Gastrocnemius medialis (tissue), 4 donors: ENCODE measurements at regions of chr11 and their contacts with region 1.

Region 1: DNA sequence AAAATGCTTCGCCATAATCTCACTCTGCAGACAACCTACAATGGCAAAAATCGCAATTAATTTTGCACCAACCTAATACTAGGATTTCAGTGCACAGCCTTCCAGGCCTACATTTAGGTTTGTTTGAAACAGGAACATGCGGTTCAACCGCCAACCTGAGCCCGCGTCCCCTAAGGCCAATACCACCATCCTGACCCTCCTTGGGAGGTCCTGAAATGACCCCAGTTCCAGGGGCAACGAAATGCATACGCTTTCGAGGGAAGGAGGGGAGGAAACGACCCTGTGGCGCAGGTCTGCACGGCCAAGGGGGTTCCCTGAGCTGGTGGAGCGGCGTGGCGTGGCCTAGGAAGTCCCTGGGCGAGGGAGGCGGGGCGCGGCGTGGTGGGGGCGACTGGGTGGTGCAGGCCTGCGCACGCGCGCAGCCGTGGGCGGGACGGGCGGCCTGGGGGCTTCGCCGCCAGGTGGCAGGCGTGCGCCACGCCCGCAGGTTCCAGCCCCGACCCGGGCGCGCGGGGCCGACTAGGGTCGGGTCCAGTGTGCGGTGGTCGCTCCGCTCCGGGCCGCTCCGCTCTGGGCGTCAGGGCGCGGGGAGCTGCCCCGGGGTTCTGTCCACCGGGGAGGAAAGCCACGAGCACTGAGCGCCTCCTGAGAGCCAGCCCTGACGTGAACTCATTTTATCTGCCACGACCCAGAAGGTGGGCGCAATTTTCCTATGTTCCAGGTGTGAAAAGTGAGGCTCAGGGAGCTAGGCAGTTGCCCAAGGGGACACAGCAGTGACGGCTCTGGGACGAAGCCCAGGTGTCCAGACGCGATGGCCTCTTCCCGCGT is 94.1 kb downstream of the SWAP70 start:
- DNase-seq: peak; percentile 67 to 73
- ATAC-seq: peak; percentile 51 to 70
- H3K4me3 ChIP-seq: peak overlapping the region; percentile 61 to 86 (median 69)
- H3K27ac ChIP-seq: peak overlapping the region; percentile 76 to 86 (median 83)
- H3K4me1 ChIP-seq: peaks cover 18 to 25% of the 10 kb centered on the region in 2 donors
- H3K27me3 ChIP-seq: no peaks in the 10 kb centered on the region
- CTCF ChIP-seq: peak in 4 of 5 experiments; percentile 96 to 98 (median 98)
- POLR2A ChIP-seq: peak; percentile 52 to 53

Region 2: DNA sequence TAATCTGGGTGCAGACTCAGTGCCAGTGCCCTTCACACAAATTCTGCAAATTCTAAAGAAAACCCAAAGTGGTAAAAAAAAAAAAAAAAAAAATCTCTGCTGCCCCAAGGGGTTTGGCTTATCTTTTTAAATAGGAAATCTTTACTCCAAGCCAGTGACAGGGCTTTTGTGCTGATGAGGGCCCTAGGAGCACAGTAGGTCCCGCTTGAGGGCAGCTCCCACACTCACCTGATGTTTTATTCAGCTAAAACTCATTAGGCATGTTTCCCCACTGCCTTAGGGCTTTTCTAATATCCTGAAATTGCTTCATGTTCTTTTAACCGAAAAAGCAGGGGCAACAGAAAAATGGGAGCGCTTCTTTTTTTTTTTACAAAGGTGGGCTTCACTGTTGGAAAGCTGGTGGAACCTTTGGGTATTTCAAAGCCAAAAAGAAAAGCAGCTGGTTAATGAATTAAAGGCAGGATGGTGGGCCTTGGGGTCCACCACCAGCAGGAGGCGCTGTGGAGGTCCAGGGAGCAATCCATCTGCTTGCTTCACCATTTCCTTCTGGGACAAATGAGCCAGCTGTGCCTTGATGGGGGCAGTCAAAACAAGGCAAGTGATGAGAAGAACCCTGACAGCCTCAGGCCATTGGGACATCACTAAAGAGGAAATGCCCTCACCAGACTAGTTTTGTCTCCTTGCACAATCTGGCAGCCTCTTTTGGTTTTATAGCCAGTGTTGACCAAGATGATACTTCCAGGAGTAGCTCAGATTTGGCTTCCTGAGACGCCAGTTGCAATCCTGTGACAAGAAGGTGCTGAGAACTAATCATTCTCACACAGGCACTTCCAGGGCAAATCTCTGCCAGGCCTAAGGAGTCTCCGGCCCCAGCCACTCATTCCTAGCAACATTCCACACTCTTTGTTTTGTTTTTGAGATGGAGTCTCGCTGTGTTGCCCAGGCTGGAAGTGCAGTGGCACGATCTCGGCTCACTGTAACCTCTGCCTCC is 222.9 kb before region 1 on chr11:
- in situ Hi-C with region 1: no loop called
- intact Hi-C with region 1: loop called (anchors 10 kb)
- DNase-seq: peak; percentile 44 to 82
- ATAC-seq: peak; percentile 82 to 93
- H3K4me3 ChIP-seq: no peak overlapping the region
- H3K27ac ChIP-seq: peak overlapping the region in 3 of 4 donors; percentile 36 to 70 (median 61)
- H3K4me1 ChIP-seq: no peaks in the 10 kb centered on the region
- H3K27me3 ChIP-seq: no peaks in the 10 kb centered on the region
- CTCF ChIP-seq: peak; percentile 54 to 84 (median 76)
- POLR2A ChIP-seq: no peak

Region 3: DNA sequence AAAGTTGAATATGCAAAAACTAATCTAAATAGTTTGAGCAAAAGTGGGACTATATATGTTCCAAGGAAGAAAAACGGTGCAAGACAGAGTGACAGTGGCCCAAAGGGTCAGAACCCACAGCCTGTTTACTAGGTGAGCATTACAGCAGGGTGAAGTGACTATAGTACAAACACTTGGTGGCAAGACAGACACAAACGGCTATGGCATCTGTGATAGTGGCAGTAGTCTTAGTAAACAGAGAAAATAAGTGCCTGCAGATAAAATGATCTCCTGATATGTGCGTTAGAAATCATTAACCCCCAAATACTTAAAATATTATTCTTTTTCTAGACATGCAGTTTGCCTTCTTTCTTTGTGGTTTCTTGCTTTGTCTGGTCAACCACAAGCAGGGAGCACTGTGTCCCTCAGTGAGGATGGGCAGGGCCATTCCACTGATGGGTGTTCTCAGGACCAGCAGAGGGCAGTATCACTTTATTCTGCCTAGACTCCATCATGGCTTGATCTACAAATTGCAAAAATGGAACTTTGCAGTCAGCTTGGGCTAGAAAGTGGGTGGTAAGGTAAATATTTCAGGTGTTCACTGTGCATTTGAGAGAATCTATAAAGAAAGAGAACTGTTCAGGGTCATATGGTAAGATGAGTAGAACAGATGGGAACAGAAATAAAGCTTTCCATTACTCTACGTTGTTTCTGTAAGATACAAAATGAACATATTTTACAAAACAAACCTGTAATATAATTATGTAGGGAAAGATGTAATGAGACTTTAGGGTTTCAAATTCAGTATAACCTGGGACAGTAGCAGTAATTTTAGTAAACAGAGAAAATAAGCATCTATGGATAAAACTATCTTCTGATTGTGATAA is 104.1 kb after region 1 on chr11:
- in situ Hi-C with region 1: no loop called
- intact Hi-C with region 1: loop called (anchors 2 kb)
- DNase-seq: peak; percentile 6 to 36
- ATAC-seq: peak; percentile 75 to 87
- H3K4me3 ChIP-seq: no peak overlapping the region
- H3K27ac ChIP-seq: no peak overlapping the region
- H3K4me1 ChIP-seq: no peaks in the 10 kb centered on the region
- H3K27me3 ChIP-seq: no peaks in the 10 kb centered on the region
- CTCF ChIP-seq: peak; percentile 50 to 74 (median 57)
- POLR2A ChIP-seq: no peak

Region 4: GRCh38 chr11:9972989-9973388 is 215.0 kb after region 1 on chr11:
- in situ Hi-C with region 1: loop called in 3 of 4 experiments (anchors 10 kb)
- intact Hi-C with region 1: loop called (anchors 1 kb)
- DNase-seq: no peak
- ATAC-seq: peak; percentile 57 to 73
- H3K4me3 ChIP-seq: no peak overlapping the region
- H3K27ac ChIP-seq: no peak overlapping the region
- H3K4me1 ChIP-seq: peaks cover 15 to 17% of the 10 kb centered on the region in 2 donors
- H3K27me3 ChIP-seq: no peaks in the 10 kb centered on the region
- CTCF ChIP-seq: peak; percentile 43 to 65 (median 61)
- POLR2A ChIP-seq: no peak

Region 5: DNA sequence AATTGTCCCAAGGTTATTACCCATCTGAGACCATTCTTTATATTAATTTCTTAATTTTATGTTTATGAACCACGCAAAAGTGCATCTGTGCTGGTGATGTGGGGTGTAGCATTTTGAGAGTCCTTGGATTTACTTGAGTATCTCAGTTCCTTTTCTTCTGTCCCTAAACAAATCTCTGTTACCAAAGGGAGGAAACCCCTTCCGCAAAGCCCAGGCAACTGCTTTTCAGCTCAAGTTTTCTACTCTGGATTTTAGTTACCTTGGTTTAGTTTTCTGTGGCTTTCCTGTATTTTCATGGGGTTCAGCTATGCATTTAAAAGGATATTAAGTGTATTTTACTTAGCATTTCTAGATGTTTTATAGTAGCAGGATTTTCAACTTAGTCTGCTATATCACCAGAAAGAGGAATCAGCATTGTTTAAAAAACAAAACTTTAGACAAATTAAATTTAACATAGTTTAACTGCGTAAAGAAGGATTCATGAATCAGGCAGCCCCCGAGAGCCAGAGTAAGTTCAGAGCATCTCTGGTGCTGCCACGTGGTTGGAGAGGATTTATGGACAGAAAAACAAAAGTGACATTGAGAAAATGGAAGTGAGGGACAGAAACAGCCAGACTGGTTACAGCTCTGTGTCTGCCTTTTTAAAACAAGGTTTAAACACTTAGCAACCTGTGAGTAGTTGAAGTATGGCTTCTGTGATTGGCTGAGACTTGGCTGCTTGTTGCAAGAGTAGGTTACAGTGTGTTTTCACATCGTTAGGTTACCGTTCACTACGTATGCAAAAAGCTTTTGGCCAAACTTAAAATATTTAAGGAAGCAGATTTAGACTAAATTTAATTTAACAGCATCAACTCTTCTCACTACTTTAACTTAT is 556.4 kb after region 1 on chr11:
- in situ Hi-C with region 1: loop called in 3 of 4 experiments (anchors 10 to 25 kb)
- intact Hi-C with region 1: loop called (anchors 1 kb)
- DNase-seq: no peak
- ATAC-seq: no peak
- H3K4me3 ChIP-seq: no peak overlapping the region
- H3K27ac ChIP-seq: no peak overlapping the region
- H3K4me1 ChIP-seq: peaks cover 30 to 37% of the 10 kb centered on the region in 2 donors
- H3K27me3 ChIP-seq: no peaks in the 10 kb centered on the region
- CTCF ChIP-seq: no peak
- POLR2A ChIP-seq: no peak

Region 6: DNA sequence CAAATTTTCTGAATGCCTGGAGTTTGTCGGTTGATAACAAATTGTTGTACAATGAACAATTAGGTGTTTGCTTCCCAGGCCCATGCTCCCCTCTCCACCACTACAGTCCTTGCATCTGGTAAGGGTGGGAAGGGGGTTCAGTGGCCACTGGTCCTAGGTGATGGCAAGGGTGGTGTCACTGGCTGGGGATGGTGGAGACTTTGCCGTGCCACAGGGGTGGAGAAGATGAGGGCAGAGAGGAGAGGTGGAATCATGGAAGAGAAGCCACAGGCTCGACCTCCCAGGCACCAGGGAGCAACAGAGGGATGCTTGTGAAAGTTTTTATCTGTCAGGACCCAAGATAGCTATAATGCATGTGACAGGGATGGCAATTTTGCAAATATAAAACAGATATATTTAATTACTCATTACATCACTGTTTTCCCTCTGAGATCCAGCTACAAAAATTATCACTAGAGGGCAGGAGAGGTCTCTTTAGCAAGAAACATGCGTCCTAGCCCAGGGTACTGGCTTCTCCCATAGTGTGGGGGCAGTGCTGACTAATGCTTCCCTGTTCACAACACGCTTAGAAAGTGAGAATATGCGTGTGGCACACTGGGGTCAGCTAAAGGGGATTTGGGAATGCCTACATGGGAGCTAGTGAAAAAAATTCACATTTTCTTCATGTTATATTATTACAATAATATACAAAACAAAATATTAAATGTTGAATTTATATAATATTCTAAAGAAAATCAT is 648.0 kb after region 1 on chr11:
- in situ Hi-C with region 1: no loop called
- intact Hi-C with region 1: loop called (anchors 1 kb)
- DNase-seq: peak; percentile 80 to 82
- ATAC-seq: peak; percentile 33 to 62
- H3K4me3 ChIP-seq: no peak overlapping the region
- H3K27ac ChIP-seq: peak overlapping the region; percentile 77 to 95 (median 89)
- H3K4me1 ChIP-seq: peaks cover 55 to 56% of the 10 kb centered on the region in 2 donors
- H3K27me3 ChIP-seq: no peaks in the 10 kb centered on the region
- CTCF ChIP-seq: peak; percentile 56 to 81 (median 71)
- POLR2A ChIP-seq: no peak